SK-N-SH (cell line): ENCODE measurements at regions of chr17 and their contacts with region 1.

Region 1: GRCh38 chr17:6069539-6070429 is at the start of gene WSCD1:
- DNase-seq: peak; percentile 87
- H3K4me3 ChIP-seq: peak within 1 kb of the TSS in 1 of 2 experiments; percentile 45; a peak in 2 of 4 replicates
- H3K27ac ChIP-seq: no peak within 1 kb of the TSS
- H3K4me1 ChIP-seq: peaks cover 0 to 2% of the 10 kb centered on the region in 2 experiments; a peak in 1 of 4 replicates
- H3K27me3 ChIP-seq: peaks cover 47% of the 10 kb centered on the region
- CTCF ChIP-seq: no peak
- EP300 ChIP-seq: no peak
- RAD21 ChIP-seq: no peak
- polyA plus RNA-seq, gene WSCD1: 0.03 TPM in 2 replicates

Region 2: DNA sequence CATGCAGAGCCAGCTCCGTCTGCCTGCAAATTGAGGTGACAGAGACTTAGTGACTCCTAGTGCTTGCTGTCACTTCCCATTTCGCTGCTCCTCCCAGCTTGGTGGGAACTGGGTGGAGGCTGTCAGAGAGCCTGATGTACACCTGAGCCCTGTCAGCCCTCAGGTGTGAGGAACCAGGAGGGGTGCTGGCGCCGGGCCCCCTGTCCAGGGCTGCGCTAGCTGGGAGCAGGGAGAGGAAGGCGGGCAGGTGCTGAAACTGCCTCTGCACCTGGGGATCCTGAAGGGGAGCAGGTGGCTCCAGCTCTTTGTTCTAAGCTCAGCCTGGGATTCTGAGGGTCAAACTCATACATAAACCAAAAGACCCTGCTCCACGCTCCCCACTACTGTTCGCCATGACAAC is 10.4 kb before region 1 on chr17:
- CTCF ChIA-PET with region 1: interaction called, 11 read pairs
- POLR2A ChIA-PET with region 1: no interaction called
- DNase-seq: no peak
- H3K4me3 ChIP-seq: no peak overlapping the region
- H3K27ac ChIP-seq: no peak overlapping the region
- H3K4me1 ChIP-seq: no peaks in the 10 kb centered on the region
- H3K27me3 ChIP-seq: peaks cover 60% of the 10 kb centered on the region; the same call in 1 of the 2 replicates
- CTCF ChIP-seq: no peak
- EP300 ChIP-seq: no peak
- RAD21 ChIP-seq: no peak